Right cardiac atrium (tissue), 5 donors: ENCODE measurements at regions of chr7 and their contacts with region 1.

Region 1: GRCh38 chr7:113705439-113705838 is 213.4 kb downstream of the PPP1R3A start:
- DNase-seq: no peak
- ATAC-seq: no peak
- H3K4me3 ChIP-seq: no peak overlapping the region
- H3K27ac ChIP-seq: no peak overlapping the region
- H3K4me1 ChIP-seq: no peaks in the 10 kb centered on the region
- H3K27me3 ChIP-seq: no peaks in the 10 kb centered on the region

Region 2: GRCh38 chr7:113404245-113404644 is 301.2 kb before region 1 on chr7:
- intact Hi-C with region 1: loop called in 1 of 4 experiments (anchors 10 kb)
- DNase-seq: no peak
- ATAC-seq: no peak
- H3K4me3 ChIP-seq: no peak overlapping the region
- H3K27ac ChIP-seq: no peak overlapping the region
- H3K4me1 ChIP-seq: no peaks in the 10 kb centered on the region
- H3K27me3 ChIP-seq: no peaks in the 10 kb centered on the region